Activated T-helper 1 cell treated with anti-CD3 and anti-CD28 coated beads, Interleukin-12 subunit alpha, Interleukin-12 subunit beta, Interleukin-2, Interleukin-4 antibody, amounts not matched to agents 30 ng/mL and 10 ng/mL and 1 ng/mL, durations not matched to agents 14 hours and 24 hours and 36 hours (primary cell): ENCODE measurements at regions of chr7 and their contacts with region 1.

Region 1: DNA sequence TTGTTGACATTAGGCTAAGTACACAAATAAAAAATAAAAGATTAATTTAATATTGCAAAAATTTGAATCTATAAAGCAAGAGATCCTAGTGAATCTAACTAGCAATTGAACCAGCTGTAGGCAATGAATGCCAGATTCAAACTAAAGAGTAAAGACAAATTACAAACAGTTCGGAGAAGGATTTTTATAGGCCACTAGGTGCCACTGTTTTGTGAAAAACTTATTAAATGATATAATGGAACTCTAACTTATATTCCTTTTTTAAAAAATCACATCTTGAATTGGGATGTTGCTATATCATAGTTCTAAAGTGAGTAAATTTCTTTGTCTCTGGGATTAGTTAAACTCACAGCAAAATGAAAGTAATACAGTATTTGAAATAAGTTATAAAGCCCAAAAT is 39.1 kb upstream of the GNAI1 start:
- DNase-seq: no peak
- H3K4me3 Mint-ChIP-seq: no peak overlapping the region
- H3K27ac Mint-ChIP-seq: no peak overlapping the region
- H3K4me1 Mint-ChIP-seq: no peaks in the 10 kb centered on the region
- H3K27me3 Mint-ChIP-seq: no peaks in the 10 kb centered on the region

Region 2: GRCh38 chr7:79953130-79953529 is 142.4 kb before region 1 on chr7:
- intact Hi-C with region 1: no loop called
- DNase-seq: no peak
- H3K4me3 Mint-ChIP-seq: no peak overlapping the region
- H3K27ac Mint-ChIP-seq: no peak overlapping the region
- H3K4me1 Mint-ChIP-seq: no peaks in the 10 kb centered on the region
- H3K27me3 Mint-ChIP-seq: no peaks in the 10 kb centered on the region

Region 3: DNA sequence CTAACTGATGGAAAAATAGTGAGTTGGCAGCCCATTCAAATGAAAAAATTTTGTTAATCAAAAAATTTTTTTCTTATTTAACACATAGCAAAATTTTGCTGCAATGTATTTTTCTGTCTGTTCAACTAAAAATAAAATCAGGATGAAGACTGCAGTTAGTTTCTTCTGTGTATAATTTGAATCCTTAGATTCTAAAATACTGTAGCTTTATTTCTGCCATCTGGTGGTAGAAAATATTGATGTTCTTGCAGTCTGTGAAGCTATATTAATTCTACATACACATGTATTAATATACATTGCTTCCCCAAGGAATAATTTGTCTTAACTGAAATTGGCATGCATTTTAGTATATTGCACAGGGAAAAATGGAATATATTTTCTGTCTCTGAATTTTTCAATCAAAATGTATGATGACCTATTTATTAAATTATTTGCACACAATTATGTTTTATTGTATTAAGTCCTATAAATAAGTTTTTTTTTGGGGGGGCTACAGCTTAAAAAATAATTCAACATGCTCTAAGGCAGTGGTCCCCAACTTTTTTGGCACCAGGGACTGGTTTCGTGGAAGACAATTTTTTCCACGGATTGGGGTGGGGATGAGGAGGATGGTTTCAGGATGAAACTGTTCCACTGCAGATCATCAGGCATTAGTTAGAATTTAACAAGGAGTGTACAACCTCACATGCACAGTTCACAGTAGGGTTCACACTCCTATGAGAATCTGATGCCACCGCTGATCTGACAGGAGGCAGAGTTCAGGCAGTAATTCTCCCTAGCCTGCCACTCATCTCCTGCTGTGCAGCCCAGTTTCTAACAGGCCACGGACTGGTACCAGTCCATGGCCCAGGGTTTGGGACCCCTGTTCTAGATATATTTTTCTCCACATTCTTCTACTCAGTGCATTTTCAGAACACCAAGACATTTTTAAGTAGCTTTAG is 297.0 kb after region 1 on chr7:
- intact Hi-C with region 1: loop called (anchors 1 kb)
- DNase-seq: no peak
- H3K4me3 Mint-ChIP-seq: no peak overlapping the region
- H3K27ac Mint-ChIP-seq: no peak overlapping the region
- H3K4me1 Mint-ChIP-seq: no peaks in the 10 kb centered on the region
- H3K27me3 Mint-ChIP-seq: no peaks in the 10 kb centered on the region

Region 4: GRCh38 chr7:80453699-80454340 is 358.3 kb after region 1 on chr7:
- intact Hi-C with region 1: loop called (anchors 10 kb)
- DNase-seq: no peak
- H3K4me3 Mint-ChIP-seq: no peak overlapping the region
- H3K27ac Mint-ChIP-seq: no peak overlapping the region
- H3K4me1 Mint-ChIP-seq: no peaks in the 10 kb centered on the region
- H3K27me3 Mint-ChIP-seq: no peaks in the 10 kb centered on the region